Psoas muscle (tissue), 8 donors: ENCODE measurements at regions of chr22 and their contacts with region 1.

Region 1: DNA sequence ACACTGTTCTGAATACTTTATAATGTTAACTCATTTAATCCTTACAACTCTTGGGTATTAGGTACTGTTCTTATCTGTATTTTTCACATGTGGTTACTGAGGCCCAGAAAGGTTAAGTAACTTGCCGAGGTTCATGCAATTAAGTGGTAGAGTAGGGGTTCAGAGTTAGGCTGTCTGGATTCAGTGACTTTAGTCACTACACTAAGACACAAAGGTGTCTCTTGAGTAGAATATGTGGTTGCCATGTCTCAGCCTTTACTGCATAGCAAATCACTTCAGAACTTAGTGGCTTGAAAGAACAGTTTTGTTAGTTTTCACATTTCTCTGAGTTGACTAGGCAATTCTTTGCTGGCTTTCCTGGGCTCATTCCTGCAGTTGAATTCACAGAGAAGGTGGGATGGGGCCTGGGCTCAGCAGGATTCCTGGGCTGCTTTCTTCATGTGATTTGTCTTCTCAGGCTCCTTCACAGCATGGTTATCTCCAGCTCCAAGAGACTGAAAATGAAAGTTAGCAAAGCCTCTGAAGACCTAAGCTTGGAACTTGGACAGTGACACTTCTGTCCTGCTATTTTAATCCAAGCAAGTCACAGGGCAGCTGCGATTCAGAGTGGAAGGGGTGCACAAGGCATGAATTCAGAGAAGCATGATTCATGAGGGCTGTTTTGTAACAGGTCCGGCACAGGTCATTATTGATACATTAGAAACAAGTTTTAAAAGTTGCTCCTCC is 68.3 kb downstream of the SPECC1L start:
- DNase-seq: peak; percentile 27 to 65
- ATAC-seq: peak; percentile 98 to 99 (median 98)
- H3K4me3 ChIP-seq: peak overlapping the region; percentile 45
- H3K27ac ChIP-seq: peak overlapping the region; percentile 83
- H3K4me1 ChIP-seq: peaks cover 18% of the 10 kb centered on the region
- H3K27me3 ChIP-seq: no peaks in the 10 kb centered on the region
- CTCF ChIP-seq: no peak

Region 2: DNA sequence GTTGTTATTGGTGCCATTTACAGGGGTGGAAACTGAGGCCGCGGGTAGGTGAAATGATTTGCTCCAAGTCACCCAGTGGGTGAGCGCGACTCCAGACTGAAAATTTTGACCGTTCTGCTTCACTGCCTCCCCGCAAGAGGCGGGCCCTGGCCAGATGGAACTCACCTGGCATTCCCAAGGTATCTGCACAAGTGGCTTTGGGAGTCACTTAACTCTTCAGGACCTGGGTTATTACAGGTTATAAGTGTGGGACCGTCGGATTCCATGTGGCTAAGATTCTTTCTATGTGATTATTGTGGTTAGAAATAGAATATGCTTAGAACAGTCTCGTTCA is 327.2 kb before region 1 on chr22:
- intact Hi-C with region 1: no loop called
- DNase-seq: no peak
- ATAC-seq: peak in 1 of 4 donors; percentile 16
- H3K4me3 ChIP-seq: peak overlapping the region; percentile 100
- H3K27ac ChIP-seq: peak overlapping the region; percentile 85
- H3K4me1 ChIP-seq: peaks cover 11% of the 10 kb centered on the region
- H3K27me3 ChIP-seq: no peaks in the 10 kb centered on the region
- CTCF ChIP-seq: no peak

Region 3: DNA sequence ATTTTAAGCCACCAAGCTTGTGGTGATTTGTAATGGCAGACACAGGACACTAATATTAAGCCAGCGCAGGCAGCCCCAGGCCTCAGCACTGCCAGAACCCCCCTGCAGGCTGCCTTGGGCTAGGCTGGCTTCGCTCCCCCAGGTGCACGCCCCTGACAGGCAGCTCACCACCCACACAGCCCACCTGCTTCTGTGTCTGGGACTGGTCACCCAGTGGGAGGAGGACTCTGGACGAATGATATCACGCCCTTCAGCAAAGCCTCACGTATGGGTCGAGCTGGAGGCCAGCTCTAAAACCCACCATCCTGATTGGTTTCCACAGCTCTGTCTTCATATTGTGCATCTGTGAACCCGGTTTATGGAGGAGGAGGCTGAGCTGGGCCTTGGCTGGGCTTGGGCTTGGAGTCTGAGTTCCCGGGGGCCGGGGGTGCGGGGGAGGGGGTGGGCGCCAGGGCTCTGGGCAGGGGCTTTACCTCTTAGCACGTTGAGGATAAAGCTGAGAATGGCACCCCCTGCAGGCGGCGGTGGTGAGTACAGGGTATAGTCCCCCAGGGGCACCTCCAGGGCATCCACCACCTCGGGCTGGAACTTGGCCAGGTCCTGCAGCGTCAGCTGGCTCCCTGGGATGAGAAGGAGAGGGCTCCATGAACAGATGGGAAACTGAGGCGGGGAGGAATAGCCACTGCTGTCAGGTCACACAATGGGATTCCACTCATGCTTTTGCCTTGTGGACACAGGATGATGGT is 107.8 kb before region 1 on chr22:
- intact Hi-C with region 1: no loop called
- DNase-seq: peak in 1 of 2 donors; percentile 65
- ATAC-seq: no peak
- H3K4me3 ChIP-seq: no peak overlapping the region
- H3K27ac ChIP-seq: no peak overlapping the region
- H3K4me1 ChIP-seq: no peaks in the 10 kb centered on the region
- H3K27me3 ChIP-seq: peaks cover 0 to 2% (median 0%) of the 10 kb centered on the region in 3 donors
- CTCF ChIP-seq: no peak

Region 4: GRCh38 chr22:24315367-24315966 is 23.4 kb before region 1 on chr22:
- intact Hi-C with region 1: no loop called
- DNase-seq: no peak
- ATAC-seq: no peak
- H3K4me3 ChIP-seq: no peak overlapping the region
- H3K27ac ChIP-seq: no peak overlapping the region
- H3K4me1 ChIP-seq: no peaks in the 10 kb centered on the region
- H3K27me3 ChIP-seq: no peaks in the 10 kb centered on the region
- CTCF ChIP-seq: no peak

Region 5: DNA sequence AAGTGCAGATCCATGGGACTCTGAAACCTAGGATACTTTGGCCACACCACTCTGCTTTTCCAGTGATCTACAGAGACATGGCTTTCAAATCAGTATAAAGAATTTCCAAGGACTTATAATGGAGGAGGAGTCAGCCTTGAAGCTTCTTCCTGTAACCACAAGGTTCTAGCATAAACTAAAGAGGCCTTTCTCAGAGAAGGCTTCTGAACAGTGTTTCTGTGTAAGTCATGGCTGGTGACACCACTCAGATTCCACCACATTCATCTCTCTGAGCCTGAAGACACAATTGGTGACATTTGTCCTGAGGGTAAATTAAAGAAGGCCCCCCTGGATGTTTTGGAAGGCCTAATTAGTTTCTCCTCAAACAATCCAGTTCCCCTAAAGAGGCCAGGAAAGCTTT is 59.5 kb after region 1 on chr22:
- intact Hi-C with region 1: loop called in 1 of 2 experiments (anchors 5 kb)
- DNase-seq: no peak
- ATAC-seq: no peak
- H3K4me3 ChIP-seq: no peak overlapping the region
- H3K27ac ChIP-seq: no peak overlapping the region
- H3K4me1 ChIP-seq: peaks cover 45% of the 10 kb centered on the region
- H3K27me3 ChIP-seq: no peaks in the 10 kb centered on the region
- CTCF ChIP-seq: no peak

Region 6: GRCh38 chr22:24583221-24584165 is 244.6 kb after region 1 on chr22:
- intact Hi-C with region 1: no loop called
- DNase-seq: no peak
- ATAC-seq: peak in 3 of 4 donors; percentile 14 to 23 (median 18)
- H3K4me3 ChIP-seq: no peak overlapping the region
- H3K27ac ChIP-seq: no peak overlapping the region
- H3K4me1 ChIP-seq: no peaks in the 10 kb centered on the region
- H3K27me3 ChIP-seq: no peaks in the 10 kb centered on the region
- CTCF ChIP-seq: no peak